Activated CD8-positive, alpha-beta memory T cell treated with anti-CD3 and anti-CD28 coated beads, Interleukin-2, amount 10 ng/mL, durations not matched to agents 7 days and 5 days (primary cell): ENCODE measurements at regions of chr2 and their contacts with region 1.

Region 1: DNA sequence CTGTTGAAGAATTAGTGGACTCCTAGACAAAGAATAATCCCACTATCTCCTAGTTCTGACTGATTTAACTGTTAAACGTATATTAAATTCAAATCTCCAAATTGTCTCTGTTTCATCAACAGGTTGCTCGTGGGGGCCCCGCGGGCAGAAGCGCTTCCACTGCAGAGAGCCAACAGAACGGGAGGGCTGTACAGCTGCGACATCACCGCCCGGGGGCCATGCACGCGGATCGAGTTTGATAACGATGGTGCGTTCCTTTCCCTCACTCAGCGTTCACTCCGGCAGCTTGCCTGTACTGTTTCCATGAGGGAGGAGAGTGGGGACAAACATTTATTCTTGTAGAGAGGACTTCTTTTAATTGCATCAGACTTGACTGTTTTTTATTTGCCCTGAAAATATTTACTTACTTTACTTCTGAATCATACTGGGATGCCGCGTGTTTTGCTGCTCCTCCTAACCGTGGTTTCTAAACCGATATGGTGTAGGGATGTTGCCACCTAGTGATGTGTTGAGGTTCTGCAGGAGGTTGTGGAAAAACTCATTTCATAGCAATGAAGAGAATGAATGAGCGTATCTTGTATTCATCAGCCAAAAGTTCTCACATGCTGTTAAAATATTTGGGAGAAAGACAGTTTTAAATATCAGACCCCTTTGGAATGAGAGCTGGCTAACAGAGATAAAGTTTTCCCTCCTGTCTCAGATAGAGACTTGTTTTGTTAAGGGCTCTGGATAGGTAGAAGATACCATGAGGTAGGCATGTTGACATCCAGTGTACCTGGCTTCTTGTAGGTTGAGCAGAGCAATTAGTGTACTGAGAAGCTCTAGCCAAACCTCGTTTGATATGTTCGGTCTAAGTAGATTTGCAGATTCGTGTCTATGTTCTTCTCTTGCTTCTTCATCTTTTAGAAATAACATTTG is 38.3 kb downstream of the ITGA6 start:
- DNase-seq: peak; percentile 86
- ATAC-seq: peak; percentile 29
- H3K4me3 Mint-ChIP-seq: peak overlapping the region; percentile 14
- H3K27ac Mint-ChIP-seq: peak overlapping the region; percentile 39
- H3K4me1 Mint-ChIP-seq: peaks cover 65% of the 10 kb centered on the region
- H3K27me3 Mint-ChIP-seq: peaks cover 5% of the 10 kb centered on the region

Region 2: DNA sequence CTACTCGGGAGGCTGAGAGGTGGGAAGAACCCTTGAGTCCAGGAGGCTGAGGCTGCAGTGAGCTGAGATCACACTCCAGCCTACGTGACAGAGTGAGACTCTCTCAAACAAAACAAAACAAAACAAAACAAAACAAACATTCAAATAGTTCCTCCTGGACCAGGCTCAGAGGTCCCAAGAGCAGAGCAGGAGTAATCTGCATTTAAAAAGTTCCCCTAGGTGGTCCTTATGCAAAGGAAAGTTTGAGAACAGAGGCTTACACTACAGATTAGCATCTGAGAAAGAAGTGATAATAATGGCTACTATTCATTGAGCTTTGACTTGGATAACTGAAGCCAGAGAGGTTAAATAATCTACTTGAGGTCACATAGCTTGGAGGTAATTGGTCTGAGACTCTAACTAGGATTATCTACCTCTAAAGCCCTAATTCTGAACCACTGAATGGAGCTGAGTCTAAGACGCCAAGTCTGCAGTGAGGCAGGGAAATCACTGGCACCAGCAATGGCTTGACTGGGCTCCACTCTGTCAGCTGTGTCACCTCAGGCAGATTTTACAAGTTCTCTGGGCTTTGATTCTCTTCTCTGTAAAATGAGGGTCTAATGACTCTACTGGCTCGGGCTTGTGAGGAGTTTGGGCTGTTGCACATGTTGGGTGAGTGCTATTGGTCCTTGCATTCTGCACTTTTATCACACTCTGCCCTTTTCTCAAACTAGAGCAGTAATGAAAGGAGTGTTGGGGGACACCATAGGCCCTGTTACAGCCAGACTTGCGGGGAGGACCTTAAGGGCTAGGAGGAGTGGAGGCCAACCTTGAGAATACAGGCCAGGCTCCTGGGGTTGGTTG is 333.7 kb before region 1 on chr2:
- CTCF ChIA-PET with region 1: interaction called, 20 read pairs
- DNase-seq: no peak
- ATAC-seq: no peak
- H3K4me3 Mint-ChIP-seq: no peak overlapping the region
- H3K27ac Mint-ChIP-seq: no peak overlapping the region
- H3K4me1 Mint-ChIP-seq: no peaks in the 10 kb centered on the region
- H3K27me3 Mint-ChIP-seq: peaks cover 24% of the 10 kb centered on the region

Region 3: DNA sequence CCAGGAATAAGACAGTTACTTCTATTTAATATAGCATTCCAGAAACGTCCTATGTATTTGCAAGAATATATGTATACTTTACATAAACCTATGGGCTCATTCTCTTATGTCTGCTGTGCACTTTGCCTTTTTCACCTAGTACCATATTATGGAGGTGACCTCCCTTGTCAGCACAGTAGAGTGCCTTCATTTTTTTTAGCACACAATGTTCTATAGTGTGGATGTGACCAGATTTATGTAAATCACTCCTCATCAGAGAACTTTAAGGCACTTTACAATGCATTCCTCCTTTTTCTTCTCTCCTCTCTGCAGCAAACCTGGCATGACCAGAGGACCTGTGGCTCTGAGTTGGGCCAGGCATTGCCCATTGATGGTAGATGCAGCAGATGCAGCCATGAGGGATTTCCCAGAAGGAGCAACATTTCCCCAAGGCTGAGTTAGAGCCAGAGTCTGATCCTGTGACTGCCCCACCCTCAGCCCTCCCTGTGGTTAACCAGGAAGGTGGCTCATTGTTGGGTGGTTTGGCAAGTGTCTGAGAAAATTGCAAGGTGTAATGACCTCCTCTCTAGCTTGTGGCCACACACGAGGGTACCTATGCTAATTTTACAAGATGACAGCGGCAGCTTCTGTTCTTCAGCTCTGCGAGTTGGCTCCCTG is 286.5 kb before region 1 on chr2:
- CTCF ChIA-PET with region 1: interaction called, 97 read pairs
- DNase-seq: peak; percentile 53
- ATAC-seq: peak; percentile 53
- H3K4me3 Mint-ChIP-seq: no peak overlapping the region
- H3K27ac Mint-ChIP-seq: no peak overlapping the region
- H3K4me1 Mint-ChIP-seq: peaks cover 10% of the 10 kb centered on the region
- H3K27me3 Mint-ChIP-seq: peaks cover 8% of the 10 kb centered on the region

Region 4: DNA sequence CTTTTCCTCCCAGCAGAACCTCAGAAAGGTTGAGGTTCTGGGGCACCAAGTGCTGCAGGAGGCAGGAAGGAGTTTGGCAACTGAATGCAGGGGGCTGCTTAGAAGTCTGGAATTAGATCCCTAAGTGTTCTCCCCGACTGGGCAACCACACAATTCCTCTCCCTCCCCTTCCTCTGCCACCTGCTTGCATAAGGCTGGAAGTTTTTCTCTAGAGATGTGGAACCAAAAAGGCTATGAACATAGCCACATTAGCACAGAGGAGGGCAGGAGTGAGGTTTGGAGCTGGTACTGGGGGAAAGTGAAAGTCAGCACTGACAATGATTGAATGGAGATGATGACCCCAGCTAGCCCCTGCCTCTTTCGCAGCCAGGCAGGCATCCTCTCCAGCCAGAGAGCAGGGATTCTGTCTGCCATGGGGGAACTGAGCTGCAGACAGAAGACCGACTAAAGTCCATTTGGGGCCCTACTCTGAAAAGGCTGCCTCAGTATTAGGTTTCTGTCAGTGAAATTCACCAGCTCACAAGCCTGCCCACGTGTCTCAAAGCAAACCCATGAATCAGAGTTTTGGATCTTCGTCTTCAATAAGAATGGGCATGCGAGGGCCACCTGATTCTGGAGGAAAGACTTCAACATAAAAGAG is 126.2 kb before region 1 on chr2:
- CTCF ChIA-PET with region 1: interaction called, 11 read pairs
- DNase-seq: no peak
- ATAC-seq: no peak
- H3K4me3 Mint-ChIP-seq: peak overlapping the region; percentile 40
- H3K27ac Mint-ChIP-seq: no peak overlapping the region
- H3K4me1 Mint-ChIP-seq: peaks cover 15% of the 10 kb centered on the region
- H3K27me3 Mint-ChIP-seq: peaks cover 8% of the 10 kb centered on the region

Region 5: DNA sequence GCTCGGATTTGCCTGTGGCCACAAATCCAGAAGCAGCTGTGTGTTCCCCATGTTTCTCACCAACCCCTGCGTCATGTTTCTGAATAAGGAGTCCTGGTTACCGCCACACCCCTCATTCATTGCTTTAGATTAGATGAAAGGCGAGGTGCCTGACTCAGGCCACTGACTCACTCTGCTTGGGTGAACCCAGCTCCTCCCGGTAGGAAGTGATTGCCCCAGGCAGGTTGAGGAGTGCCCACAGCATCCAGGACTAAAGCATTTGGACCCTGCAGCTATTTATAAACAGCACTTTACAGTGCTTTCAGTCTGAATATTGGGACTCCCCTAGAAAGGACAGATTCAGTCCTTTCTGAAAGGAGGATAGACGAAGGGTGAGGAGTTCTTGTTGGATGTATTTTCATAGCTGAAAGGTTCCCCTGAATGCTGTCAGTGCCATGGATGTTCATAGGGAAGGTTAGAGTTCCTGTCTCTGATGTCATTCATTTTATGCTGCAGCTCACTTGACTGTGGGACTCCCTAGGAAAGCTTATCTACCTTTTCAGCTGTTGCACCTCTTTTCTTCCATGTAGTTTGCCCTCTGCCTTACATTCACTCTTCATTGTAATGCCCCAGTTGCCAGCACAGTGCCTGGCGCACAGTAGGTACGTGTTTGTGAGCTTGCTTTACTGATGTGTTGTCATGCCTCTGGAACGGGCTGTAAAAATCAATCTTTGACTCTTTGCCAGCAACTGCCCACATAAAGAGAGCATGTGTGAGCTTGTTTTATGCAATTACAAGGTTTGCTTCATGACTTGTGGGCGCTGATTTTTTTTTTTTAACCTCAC is 23.4 kb before region 1 on chr2:
- CTCF ChIA-PET with region 1: interaction called, 56 read pairs
- DNase-seq: no peak
- ATAC-seq: no peak
- H3K4me3 Mint-ChIP-seq: no peak overlapping the region
- H3K27ac Mint-ChIP-seq: no peak overlapping the region
- H3K4me1 Mint-ChIP-seq: peaks cover 31% of the 10 kb centered on the region
- H3K27me3 Mint-ChIP-seq: peaks cover 12% of the 10 kb centered on the region

Region 6: GRCh38 chr2:172484253-172484652 is 18.6 kb after region 1 on chr2:
- CTCF ChIA-PET with region 1: interaction called, 18 read pairs
- DNase-seq: no peak
- ATAC-seq: no peak
- H3K4me3 Mint-ChIP-seq: no peak overlapping the region
- H3K27ac Mint-ChIP-seq: no peak overlapping the region
- H3K4me1 Mint-ChIP-seq: peaks cover 19% of the 10 kb centered on the region
- H3K27me3 Mint-ChIP-seq: no peaks in the 10 kb centered on the region